Activated CD4-positive, alpha-beta memory T cell treated with anti-CD3 and anti-CD28 coated beads for 36 hours (primary cell): ENCODE measurements at regions of chr2 and their contacts with region 1.

Region 1: DNA sequence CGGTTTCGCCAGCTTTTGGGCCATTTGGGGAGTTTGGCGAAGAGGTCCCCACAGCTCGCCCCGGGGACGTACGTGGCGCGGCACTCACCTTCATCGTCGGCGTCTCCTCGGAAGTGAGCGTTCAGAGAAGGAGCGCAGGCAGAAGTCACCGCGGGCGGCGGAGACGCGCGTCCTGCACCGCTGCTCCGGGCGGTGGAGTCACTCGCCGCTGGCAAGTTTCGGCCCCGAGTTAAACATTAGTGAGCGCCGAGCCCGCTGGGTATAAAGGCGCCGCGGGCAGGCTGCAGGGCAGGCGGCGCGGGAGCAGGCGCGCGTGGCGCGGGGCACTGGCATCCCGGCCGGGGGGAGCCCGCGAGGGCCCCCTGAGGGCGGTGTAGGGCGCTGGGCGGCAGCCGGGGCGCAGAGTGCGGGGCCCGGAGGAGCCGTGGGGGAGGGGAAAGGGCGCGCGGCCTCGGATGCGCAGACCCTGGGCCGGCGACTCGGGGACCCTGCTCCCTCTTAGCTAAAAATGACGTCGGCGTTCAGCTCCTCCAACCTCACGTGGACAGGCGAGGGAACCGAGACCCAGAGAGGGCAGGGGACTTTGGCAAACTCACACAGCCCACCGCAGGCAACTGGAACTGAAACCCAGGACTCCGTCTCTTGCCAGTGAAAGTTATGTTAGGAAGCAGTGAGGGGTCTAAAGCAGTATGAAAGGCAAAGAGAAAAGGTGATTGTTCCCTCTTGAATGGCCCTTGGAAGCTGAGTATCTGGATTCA is at the start of gene DPP4:
- DNase-seq: peak; percentile 69
- H3K4me3 Mint-ChIP-seq: peak within 1 kb of the TSS; percentile 90
- H3K27ac Mint-ChIP-seq: peak within 1 kb of the TSS; percentile 82
- H3K4me1 Mint-ChIP-seq: peaks cover 52% of the 10 kb centered on the region
- H3K27me3 Mint-ChIP-seq: no peaks in the 10 kb centered on the region
- total RNA-seq, gene DPP4: 29.9 to 30.7 TPM

Region 2: GRCh38 chr2:161965994-161966393 is 108.1 kb before region 1 on chr2:
- CTCF ChIA-PET with region 1: no interaction called
- POLR2A ChIA-PET with region 1: no interaction called
- intact Hi-C with region 1: loop called (anchors 1 kb)
- DNase-seq: no peak
- H3K4me3 Mint-ChIP-seq: no peak overlapping the region
- H3K27ac Mint-ChIP-seq: peak overlapping the region; percentile 28
- H3K4me1 Mint-ChIP-seq: peaks cover 28% of the 10 kb centered on the region
- H3K27me3 Mint-ChIP-seq: peaks cover 1% of the 10 kb centered on the region

Region 3: GRCh38 chr2:161992526-161992925 is 81.5 kb before region 1 on chr2:
- CTCF ChIA-PET with region 1: interaction called, 3 read pairs
- POLR2A ChIA-PET with region 1: no interaction called
- intact Hi-C with region 1: loop called (anchors 1 kb)
- DNase-seq: peak; percentile 77
- H3K4me3 Mint-ChIP-seq: peak overlapping the region; percentile 73
- H3K27ac Mint-ChIP-seq: peak overlapping the region; percentile 92
- H3K4me1 Mint-ChIP-seq: peaks cover 61% of the 10 kb centered on the region
- H3K27me3 Mint-ChIP-seq: no peaks in the 10 kb centered on the region

Region 4: DNA sequence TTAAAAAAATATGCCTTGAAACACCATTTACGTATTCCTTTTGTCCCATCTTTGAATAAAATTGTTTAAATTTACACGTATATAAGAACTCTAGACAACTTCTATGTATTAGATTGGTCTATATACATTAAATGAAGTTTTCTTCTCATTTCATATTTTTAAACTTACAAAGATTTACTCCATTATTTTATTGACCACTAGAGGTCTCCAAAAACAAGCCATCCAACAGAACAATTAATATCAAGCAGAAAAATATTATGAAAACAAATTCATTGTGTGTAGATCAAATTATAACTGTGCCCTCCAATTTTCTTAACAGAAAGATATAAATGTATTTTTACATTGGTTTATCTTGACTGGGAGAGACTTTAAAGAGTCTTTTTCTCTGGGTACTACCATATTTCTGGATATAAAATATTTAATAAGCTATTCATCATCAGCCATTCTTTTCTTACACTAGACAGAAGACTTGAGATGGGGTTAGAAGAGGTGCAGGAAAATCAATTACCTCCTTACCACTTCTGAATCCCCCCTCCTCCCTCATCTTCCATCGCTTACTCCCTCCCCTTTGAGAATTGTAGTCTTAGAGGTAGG is 66.5 kb before region 1 on chr2:
- CTCF ChIA-PET with region 1: interaction called, 12 read pairs
- POLR2A ChIA-PET with region 1: interaction called, 3 read pairs
- intact Hi-C with region 1: loop called (anchors 1 kb)
- DNase-seq: no peak
- H3K4me3 Mint-ChIP-seq: no peak overlapping the region
- H3K27ac Mint-ChIP-seq: no peak overlapping the region
- H3K4me1 Mint-ChIP-seq: peaks cover 37% of the 10 kb centered on the region
- H3K27me3 Mint-ChIP-seq: no peaks in the 10 kb centered on the region

Region 5: GRCh38 chr2:162013514-162014475 is 60.3 kb before region 1 on chr2:
- CTCF ChIA-PET with region 1: interaction called, 9 read pairs
- POLR2A ChIA-PET with region 1: interaction called, 4 read pairs
- intact Hi-C with region 1: loop called (anchors 1 kb)
- DNase-seq: no peak
- H3K4me3 Mint-ChIP-seq: peak overlapping the region; percentile 56
- H3K27ac Mint-ChIP-seq: peak overlapping the region; percentile 89
- H3K4me1 Mint-ChIP-seq: peaks cover 61% of the 10 kb centered on the region
- H3K27me3 Mint-ChIP-seq: no peaks in the 10 kb centered on the region

Region 6: DNA sequence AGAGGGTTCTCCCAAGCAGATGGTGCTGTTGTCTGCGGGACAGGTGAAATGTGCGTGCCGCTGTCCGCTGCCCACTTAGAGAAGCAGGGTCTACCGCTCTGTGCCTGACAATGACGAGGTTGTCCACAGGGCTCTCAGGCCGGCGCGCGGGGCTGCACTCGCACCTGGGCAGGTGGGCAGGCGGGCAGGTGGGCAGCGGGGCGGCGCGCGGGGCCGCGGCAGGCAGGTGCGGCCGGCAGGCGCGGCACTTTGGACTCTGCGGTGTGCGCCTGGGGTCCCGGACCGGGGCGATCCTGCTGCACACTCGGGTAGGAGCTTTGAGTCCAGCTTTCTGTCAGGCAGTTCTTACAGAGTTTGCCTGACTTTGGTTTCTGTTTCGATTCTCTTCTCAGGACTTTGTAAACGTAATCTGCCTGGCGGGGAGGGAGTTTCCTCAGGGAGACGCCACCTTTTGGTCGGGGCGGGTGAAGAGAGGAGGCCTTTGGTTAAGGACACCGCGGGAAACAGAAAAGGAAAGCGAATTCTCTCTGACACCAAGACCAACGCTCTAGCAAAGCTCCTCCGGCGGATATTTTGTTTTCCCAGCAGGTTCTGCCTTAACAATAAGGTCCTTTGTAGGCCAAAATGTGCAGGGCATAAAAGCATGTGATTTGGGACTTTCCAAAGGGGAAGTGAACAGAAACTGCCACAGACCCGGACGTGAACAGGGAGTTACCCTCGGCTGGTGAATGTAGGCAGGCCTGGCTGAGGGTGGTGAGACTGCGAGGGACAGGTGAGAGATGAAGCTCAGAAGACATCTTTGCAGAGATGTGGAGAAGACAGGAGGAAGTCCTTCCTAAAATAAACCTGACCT is 244.5 kb after region 1 on chr2 and contains the start of gene IFIH1:
- CTCF ChIA-PET with region 1: no interaction called
- POLR2A ChIA-PET with region 1: no interaction called
- intact Hi-C with region 1: loop called (anchors 5 kb)
- DNase-seq: peak; percentile 87
- H3K4me3 Mint-ChIP-seq: peak within 1 kb of the TSS; percentile 85
- H3K27ac Mint-ChIP-seq: peak within 1 kb of the TSS; percentile 95
- H3K4me1 Mint-ChIP-seq: peaks cover 55% of the 10 kb centered on the region
- H3K27me3 Mint-ChIP-seq: no peaks in the 10 kb centered on the region
- total RNA-seq, gene IFIH1: 33.3 to 34.2 TPM